A673 (cell line): ENCODE measurements at regions of chr12 and their contacts with region 1.

Region 1: DNA sequence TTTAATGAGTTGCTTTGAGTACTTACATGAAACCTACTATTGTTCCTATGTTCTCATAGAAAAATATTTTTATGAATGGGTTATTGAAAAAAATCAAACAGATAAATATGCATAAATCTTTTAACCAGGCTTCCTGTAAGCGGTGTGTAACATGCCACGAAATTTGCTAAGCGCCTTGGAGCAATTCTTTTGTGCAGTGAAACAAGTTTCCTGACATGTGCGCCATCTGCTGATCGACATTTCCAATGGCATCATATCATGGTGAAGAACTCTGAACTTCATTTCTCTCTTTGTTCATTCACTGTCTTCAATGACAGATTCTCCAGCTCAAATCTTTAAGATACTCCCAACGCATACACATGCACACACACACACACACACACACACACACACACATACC is 145.6 kb upstream of the NAV3 start:
- DNase-seq: peak; percentile 88
- H3K4me3 ChIP-seq: no peak overlapping the region
- H3K27ac ChIP-seq: no peak overlapping the region
- H3K4me1 ChIP-seq: peaks cover 8% of the 10 kb centered on the region
- H3K27me3 ChIP-seq: no peaks in the 10 kb centered on the region
- CTCF ChIP-seq: peak; percentile 74

Region 2: DNA sequence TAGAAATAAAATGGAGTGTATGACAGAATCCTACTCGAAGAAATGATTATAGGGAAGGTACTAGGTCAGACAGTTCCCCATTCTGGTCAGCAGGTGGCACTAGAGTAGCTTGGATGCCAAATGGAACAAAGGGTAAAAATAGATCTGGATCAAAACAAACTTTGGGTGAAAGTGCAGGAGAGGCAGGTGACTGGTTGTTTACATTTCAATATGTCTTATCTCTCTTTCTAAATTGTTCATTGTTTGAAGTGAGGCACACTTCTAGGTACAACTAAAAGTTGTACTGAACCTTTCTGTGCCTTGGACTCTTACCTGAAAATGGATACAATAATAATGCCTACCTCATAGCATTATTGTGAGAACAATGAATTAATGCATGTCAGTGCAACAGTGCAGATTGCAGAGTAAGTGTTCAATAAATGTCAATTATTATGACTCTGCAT is 1063.5 kb before region 1 on chr12:
- CTCF ChIA-PET with region 1: no interaction called
- POLR2A ChIA-PET with region 1: no interaction called
- intact Hi-C with region 1: loop called (anchors 10 kb)
- DNase-seq: peak; percentile 75
- H3K4me3 ChIP-seq: no peak overlapping the region
- H3K27ac ChIP-seq: no peak overlapping the region
- H3K4me1 ChIP-seq: no peaks in the 10 kb centered on the region
- H3K27me3 ChIP-seq: no peaks in the 10 kb centered on the region
- CTCF ChIP-seq: peak; percentile 93

Region 3: DNA sequence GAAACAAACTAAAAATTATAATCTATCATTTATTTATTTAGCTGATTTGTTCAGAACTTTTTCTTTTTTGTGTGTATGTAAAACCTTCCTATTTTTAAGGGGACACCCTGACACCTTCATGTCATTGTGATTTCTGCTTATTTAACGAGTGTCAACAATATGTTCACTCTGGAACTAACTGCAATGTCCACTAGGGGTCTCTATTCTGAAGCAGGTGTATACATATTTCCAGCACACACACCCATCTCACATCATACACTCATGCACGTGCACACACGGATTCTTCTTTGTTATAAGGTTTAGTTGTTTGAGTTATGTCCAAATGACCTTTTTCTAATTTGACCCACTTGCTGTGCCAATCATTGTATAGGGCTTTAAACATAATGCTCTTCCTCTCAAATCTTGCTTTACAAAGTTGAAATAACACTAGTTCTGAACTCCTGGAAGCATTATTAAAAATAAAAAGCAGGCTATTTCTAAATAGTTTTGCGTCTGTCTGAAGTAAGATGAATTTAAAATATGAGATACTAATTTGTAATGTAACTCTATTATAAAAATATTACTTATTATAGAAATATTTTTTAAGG is 635.3 kb before region 1 on chr12:
- CTCF ChIA-PET with region 1: interaction called, 3 read pairs
- POLR2A ChIA-PET with region 1: no interaction called
- intact Hi-C with region 1: loop called (anchors 1 kb)
- DNase-seq: peak; percentile 78
- H3K4me3 ChIP-seq: no peak overlapping the region
- H3K27ac ChIP-seq: no peak overlapping the region
- H3K4me1 ChIP-seq: no peaks in the 10 kb centered on the region
- H3K27me3 ChIP-seq: no peaks in the 10 kb centered on the region
- CTCF ChIP-seq: peak; percentile 83

Region 4: GRCh38 chr12:77152623-77153193 is 532.4 kb before region 1 on chr12:
- CTCF ChIA-PET with region 1: interaction called, 9 read pairs
- POLR2A ChIA-PET with region 1: no interaction called
- intact Hi-C with region 1: loop called (anchors 2 kb)
- DNase-seq: peak; percentile 47
- H3K4me3 ChIP-seq: no peak overlapping the region
- H3K27ac ChIP-seq: no peak overlapping the region
- H3K4me1 ChIP-seq: no peaks in the 10 kb centered on the region
- H3K27me3 ChIP-seq: peaks cover 11% of the 10 kb centered on the region
- CTCF ChIP-seq: peak; percentile 58

Region 5: GRCh38 chr12:77615331-77615730 is 69.8 kb before region 1 on chr12:
- CTCF ChIA-PET with region 1: interaction called, 7 read pairs
- POLR2A ChIA-PET with region 1: no interaction called
- intact Hi-C with region 1: loop called (anchors 5 kb)
- DNase-seq: peak; percentile 55
- H3K4me3 ChIP-seq: no peak overlapping the region
- H3K27ac ChIP-seq: no peak overlapping the region
- H3K4me1 ChIP-seq: no peaks in the 10 kb centered on the region
- H3K27me3 ChIP-seq: no peaks in the 10 kb centered on the region
- CTCF ChIP-seq: peak; percentile 64